ENCODE measurements at regions of chr17 and their contacts with region 1.

Region 1: GRCh38 chr17:40559954-40560591 is 5.2 kb downstream of the CCR7 start:
- DNase-seq: peak; percentile 88
- ATAC-seq: peak; percentile 20
- H3K4me3 Mint-ChIP-seq: peak overlapping the region; percentile 97
- H3K27ac Mint-ChIP-seq: peak overlapping the region; percentile 99
- H3K4me1 Mint-ChIP-seq: peaks cover 51% of the 10 kb centered on the region
- H3K27me3 Mint-ChIP-seq: no peaks in the 10 kb centered on the region

Region 2: GRCh38 chr17:40417609-40418427 is 142.3 kb before region 1 on chr17 and contains the start of gene TOP2A:
- POLR2A ChIA-PET with region 1: interaction called, 23 read pairs
- DNase-seq: peak; percentile 95
- ATAC-seq: peak; percentile 96
- H3K4me3 Mint-ChIP-seq: peak within 1 kb of the TSS; percentile 99
- H3K27ac Mint-ChIP-seq: peak within 1 kb of the TSS; percentile 97
- H3K4me1 Mint-ChIP-seq: peaks cover 33% of the 10 kb centered on the region
- H3K27me3 Mint-ChIP-seq: no peaks in the 10 kb centered on the region
- total RNA-seq, gene TOP2A: 313 to 314 TPM

Region 3: DNA sequence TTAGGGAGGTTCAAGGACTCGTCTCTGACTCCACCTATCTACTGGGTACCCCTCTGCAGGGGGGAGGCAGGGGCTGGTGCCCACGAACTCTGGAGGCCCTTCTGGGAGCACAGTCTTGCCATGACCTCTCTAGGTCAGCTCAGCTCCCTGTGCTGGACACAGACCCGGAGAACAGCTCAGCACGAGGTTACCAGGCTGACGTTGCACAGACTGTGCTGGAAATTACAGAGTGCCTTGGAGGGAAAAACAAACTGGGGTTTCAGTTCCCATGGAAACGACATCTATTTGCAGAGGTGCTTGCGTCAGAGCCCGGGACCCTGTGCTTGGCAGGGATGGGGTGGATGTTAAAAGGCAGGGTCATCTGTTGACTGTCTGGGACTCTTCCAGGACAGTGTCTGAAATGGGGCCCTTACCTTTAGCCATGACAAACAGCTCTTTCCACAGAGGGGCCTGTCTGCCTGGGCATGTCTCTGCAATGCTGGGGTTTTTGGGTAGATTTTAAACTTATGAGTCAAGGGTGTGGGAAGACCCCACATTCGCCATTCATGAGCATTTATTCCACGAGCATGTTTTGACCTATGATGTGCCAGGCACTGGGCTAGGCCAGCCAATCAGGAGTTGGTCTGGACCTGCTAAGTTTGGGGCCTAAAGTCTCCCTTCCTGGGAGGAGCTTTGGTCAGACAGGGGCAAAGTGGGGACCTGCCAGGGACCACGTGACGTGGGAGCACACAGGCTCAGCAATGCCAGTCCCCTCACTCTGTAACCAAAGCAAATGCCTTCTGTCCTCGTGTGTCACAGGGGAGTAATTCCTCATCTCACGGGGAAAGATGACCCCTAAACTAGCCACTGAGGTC is 17.3 kb before region 1 on chr17:
- POLR2A ChIA-PET with region 1: interaction called, 579 read pairs
- DNase-seq: peak; percentile 41
- ATAC-seq: peak; percentile 8
- H3K4me3 Mint-ChIP-seq: peak overlapping the region; percentile 68
- H3K27ac Mint-ChIP-seq: peak overlapping the region; percentile 86
- H3K4me1 Mint-ChIP-seq: peaks cover 73% of the 10 kb centered on the region
- H3K27me3 Mint-ChIP-seq: peaks cover 2% of the 10 kb centered on the region

Region 4: DNA sequence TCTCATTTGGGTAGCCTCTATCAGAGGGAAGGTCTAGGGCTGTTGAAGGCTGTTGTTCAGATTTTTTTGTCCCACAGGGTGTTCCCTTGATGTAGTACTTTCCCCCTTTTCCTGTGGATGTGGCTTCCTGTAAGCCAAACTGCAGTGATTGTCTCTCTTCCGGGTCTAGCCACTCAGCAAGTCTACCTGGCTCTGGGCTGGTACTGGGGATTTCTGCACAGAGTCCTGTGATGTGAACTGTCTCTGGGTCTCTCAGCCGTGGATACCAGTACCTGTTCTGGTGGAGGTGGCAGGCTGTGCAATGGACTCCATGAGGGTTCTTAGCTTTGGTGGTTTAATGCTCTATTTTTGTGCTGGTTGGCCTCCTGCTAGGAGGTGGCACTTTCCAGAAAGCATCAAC is 28.5 kb after region 1 on chr17:
- POLR2A ChIA-PET with region 1: interaction called, 65 read pairs
- DNase-seq: no peak
- ATAC-seq: no peak
- H3K4me3 Mint-ChIP-seq: peak overlapping the region; percentile 50
- H3K27ac Mint-ChIP-seq: peak overlapping the region; percentile 71
- H3K4me1 Mint-ChIP-seq: peaks cover 52% of the 10 kb centered on the region
- H3K27me3 Mint-ChIP-seq: no peaks in the 10 kb centered on the region

Region 5: DNA sequence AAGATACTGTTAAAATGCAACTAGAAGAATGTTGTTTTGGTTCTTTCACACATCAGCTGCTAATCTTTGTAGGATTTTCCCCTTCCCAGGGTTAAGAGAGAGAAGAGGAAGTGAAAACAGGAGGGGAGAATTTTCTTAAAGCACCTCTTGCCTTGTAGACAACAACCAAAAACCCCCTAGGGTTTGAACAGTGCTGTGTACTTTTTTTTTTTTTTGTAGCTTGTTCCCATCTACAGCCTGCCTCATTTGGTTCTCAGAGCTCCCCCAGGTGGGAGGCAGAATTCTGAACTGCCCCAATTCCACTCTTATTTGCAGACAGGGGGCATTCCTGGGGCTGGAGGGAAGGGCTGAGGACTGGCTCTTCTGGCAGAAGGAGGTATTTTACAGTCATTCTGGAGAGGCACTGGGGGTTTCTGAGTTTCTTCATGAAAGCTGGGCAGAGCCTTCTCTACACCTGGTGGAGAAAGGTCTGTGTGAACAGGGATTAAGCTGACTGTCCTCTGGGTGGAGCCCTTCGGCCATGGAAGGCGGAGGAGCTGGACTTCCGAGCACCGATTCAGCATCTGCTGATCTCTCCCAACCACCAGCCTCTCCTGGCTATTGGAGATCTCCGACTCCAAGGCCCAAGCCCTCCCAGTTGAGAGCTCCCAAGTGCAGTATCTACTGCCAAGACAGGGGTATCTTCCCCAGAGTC is 55.4 kb after region 1 on chr17:
- POLR2A ChIA-PET with region 1: interaction called, 205 read pairs
- DNase-seq: no peak
- ATAC-seq: peak; percentile 39
- H3K4me3 Mint-ChIP-seq: peak overlapping the region; percentile 71
- H3K27ac Mint-ChIP-seq: peak overlapping the region; percentile 94
- H3K4me1 Mint-ChIP-seq: peaks cover 68% of the 10 kb centered on the region
- H3K27me3 Mint-ChIP-seq: no peaks in the 10 kb centered on the region